Transverse colon (tissue), 4 donors: ENCODE measurements at regions of chr14 and their contacts with region 1.

Region 1: DNA sequence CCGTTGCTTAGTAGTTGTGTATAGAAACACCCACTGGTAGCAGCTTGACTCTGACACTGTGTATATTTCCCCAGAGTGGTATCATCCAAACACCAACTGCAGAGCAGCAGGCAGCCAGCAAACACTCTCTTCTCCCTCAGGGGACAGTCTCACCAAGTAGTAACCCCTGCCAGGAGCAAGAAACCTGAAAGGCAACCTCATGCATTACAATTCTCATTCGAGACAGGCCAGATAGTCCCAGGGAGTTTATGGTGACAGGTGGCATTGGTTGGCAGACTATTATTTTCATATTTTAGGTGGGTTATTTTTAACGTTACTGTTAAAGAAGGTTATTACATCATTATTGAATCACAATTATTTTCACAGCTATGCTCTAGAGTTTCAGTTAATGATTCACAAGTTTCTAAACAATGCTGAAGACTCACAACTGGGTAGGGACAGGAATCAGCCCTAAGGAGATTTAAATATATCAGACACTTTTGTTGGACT is 222.8 kb downstream of the EGLN3 start:
- DNase-seq: no peak
- H3K4me3 ChIP-seq: no peak overlapping the region
- H3K27ac ChIP-seq: no peak overlapping the region
- H3K4me1 ChIP-seq: no peaks in the 10 kb centered on the region
- H3K27me3 ChIP-seq: no peaks in the 10 kb centered on the region
- CTCF ChIP-seq: no peak
- EP300 ChIP-seq: no peak
- POLR2A ChIP-seq: no peak

Region 2: DNA sequence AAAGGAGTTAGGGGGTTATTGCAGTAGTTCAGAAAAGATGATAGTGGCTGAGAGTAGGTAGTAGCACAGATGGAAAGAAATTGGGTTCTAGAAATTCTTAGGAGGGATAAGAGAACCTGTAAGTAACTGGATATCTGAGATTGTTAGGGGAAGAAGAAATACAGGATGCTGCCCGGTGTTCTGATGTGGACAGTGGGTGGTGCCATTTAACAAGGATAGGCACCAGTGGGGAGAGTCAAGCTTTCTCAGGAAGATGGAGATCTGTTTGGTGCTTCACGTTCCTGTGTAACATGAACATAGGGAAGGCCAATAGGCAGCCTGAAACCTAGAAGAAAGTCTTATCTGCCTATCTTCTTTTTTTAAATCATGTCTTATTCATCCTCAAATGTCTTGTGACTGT is 543.5 kb before region 1 on chr14:
- in situ Hi-C with region 1: no loop called
- intact Hi-C with region 1: no loop called
- DNase-seq: no peak
- H3K4me3 ChIP-seq: no peak overlapping the region
- H3K27ac ChIP-seq: no peak overlapping the region
- H3K4me1 ChIP-seq: no peaks in the 10 kb centered on the region
- H3K27me3 ChIP-seq: no peaks in the 10 kb centered on the region
- CTCF ChIP-seq: peak in 2 of 5 experiments; percentile 16 to 17
- EP300 ChIP-seq: no peak
- POLR2A ChIP-seq: no peak

Region 3: DNA sequence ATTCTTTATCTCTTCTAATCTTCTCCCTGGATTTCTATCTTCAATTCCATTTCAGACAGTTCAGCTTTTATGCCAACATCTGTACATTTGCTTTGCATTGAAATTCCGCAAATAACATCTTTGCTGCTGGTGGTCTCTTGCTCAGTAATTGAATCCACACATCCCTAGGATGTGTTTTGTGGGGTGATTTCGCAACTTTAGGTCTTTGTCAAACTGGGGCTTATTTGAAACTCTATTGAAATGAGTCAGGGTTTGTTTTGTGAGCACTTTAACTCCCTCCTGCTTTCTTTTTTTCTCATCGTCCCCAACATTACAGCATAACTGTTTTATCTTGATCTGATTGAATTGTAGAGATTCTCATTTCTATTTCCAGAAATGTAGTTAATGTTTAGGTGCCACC is 385.0 kb before region 1 on chr14:
- in situ Hi-C with region 1: no loop called
- intact Hi-C with region 1: no loop called
- DNase-seq: no peak
- H3K4me3 ChIP-seq: no peak overlapping the region
- H3K27ac ChIP-seq: no peak overlapping the region
- H3K4me1 ChIP-seq: no peaks in the 10 kb centered on the region
- H3K27me3 ChIP-seq: no peaks in the 10 kb centered on the region
- CTCF ChIP-seq: no peak
- EP300 ChIP-seq: no peak
- POLR2A ChIP-seq: no peak

Region 4: DNA sequence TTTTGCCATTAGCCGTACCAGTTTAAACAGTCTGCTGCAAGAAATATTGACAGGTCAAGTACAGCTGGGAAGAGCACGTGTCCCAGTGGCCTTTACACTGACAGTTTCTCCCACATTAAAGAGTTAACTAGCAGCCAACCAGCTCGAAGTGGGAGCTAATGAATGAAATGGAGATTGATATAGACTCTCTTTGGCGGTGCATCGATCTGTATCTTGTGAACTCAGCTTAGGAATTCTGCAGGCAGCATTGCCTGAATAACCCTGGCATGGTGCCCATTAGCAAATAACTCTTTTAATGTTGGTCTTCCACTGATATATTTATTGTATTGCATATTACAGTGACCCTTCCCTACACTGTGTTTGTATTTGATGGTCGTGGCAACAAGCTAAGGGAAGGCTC is 96.6 kb before region 1 on chr14:
- in situ Hi-C with region 1: no loop called
- intact Hi-C with region 1: no loop called
- DNase-seq: no peak
- H3K4me3 ChIP-seq: no peak overlapping the region
- H3K27ac ChIP-seq: no peak overlapping the region
- H3K4me1 ChIP-seq: no peaks in the 10 kb centered on the region
- H3K27me3 ChIP-seq: no peaks in the 10 kb centered on the region
- CTCF ChIP-seq: no peak
- EP300 ChIP-seq: no peak
- POLR2A ChIP-seq: no peak

Region 5: GRCh38 chr14:34665785-34666435 is 937.9 kb after region 1 on chr14:
- in situ Hi-C with region 1: no loop called
- intact Hi-C with region 1: no loop called
- DNase-seq: peak; percentile 17
- H3K4me3 ChIP-seq: no peak overlapping the region
- H3K27ac ChIP-seq: peak overlapping the region; percentile 20 to 37 (median 30)
- H3K4me1 ChIP-seq: no peaks in the 10 kb centered on the region
- H3K27me3 ChIP-seq: no peaks in the 10 kb centered on the region
- CTCF ChIP-seq: no peak
- EP300 ChIP-seq: no peak
- POLR2A ChIP-seq: no peak

Region 6: DNA sequence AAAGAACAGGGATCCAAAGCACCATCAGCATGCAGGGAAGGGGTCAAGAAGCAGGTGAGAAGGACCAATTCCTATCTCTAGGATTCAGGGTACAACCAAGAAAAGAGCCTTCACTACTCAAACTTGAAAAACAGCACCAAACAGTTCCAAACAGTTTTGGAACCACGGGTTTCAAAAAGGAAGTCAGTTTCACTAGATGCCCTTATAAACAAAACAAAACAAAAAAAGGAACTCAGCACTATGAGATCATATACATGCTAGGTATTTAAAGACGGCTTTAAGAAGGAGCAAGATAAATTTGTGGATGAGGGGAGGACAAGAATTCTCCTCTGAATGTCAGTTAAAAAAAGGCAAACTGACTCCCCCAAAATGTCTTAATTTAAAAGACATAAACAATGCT is 1811.9 kb after region 1 on chr14:
- in situ Hi-C with region 1: no loop called
- intact Hi-C with region 1: loop called (anchors 10 kb)
- DNase-seq: no peak
- H3K4me3 ChIP-seq: no peak overlapping the region
- H3K27ac ChIP-seq: no peak overlapping the region
- H3K4me1 ChIP-seq: peaks cover 0 to 8% (median 5%) of the 10 kb centered on the region in 4 donors
- H3K27me3 ChIP-seq: peaks cover 19% of the 10 kb centered on the region
- CTCF ChIP-seq: no peak
- EP300 ChIP-seq: no peak
- POLR2A ChIP-seq: no peak